ENCODE measurements at regions of chr16 and their contacts with region 1.

Region 1: DNA sequence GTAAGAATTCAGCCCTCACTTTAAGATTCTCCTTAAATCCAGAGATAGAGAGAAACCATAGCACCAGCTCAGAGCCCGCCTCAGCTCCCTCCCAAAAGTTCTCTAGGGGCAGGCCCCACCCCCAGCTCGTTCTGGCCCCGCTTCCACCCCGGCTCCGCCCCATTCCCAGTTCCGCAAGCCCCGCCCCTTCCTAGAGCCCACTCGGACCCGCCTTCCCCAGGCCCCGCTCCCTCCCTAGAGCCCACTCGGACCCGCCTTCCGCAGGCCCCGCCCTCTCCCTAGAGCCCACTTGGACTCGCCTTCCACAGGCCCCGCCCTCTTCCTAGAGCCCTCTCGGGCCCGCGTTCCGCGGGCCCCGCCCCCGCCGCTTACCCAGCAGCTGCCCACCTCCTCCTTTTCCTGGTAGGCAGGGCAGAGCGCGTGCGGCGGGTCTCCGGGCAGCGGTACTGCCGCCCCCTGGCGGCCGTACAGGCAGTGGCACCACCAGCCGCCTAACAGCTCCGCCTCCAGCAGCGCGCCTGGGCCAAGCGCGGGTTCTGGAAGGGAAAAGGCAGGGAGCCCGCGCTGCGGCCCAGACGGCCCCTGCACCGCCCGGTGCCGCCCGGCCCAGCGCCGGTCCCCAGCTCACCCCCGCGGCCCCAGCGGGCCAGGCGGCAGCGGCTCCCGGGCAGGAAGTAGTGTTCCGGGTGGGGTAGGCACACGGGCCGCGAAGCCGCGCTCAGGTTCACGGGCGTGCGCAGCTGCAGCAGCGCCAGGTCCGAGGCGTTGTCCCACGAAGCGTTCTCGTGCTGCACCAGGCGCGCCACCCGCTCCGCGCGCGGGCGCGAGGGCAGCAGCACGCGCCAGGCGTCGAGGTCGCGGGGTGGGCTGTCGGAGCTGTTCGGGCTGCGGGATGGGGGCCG is 6.8 kb upstream of the PRSS8 start:
- DNase-seq: peak; percentile 90 to 98 (median 95)
- ATAC-seq: peak; percentile 91
- H3K4me3 ChIP-seq: peak overlapping the region; percentile 35 to 66
- H3K4me3 Mint-ChIP-seq: peak overlapping the region; percentile 69
- H3K27ac ChIP-seq: peak overlapping the region; percentile 42 to 67
- H3K27ac Mint-ChIP-seq: peak overlapping the region; percentile 77
- H3K4me1 ChIP-seq: peaks cover 16% of the 10 kb centered on the region
- H3K4me1 Mint-ChIP-seq: peaks cover 14% of the 10 kb centered on the region
- H3K27me3 ChIP-seq: no peaks in the 10 kb centered on the region
- H3K27me3 Mint-ChIP-seq: no peaks in the 10 kb centered on the region
- CTCF ChIP-seq: peak; percentile 84

Region 2: DNA sequence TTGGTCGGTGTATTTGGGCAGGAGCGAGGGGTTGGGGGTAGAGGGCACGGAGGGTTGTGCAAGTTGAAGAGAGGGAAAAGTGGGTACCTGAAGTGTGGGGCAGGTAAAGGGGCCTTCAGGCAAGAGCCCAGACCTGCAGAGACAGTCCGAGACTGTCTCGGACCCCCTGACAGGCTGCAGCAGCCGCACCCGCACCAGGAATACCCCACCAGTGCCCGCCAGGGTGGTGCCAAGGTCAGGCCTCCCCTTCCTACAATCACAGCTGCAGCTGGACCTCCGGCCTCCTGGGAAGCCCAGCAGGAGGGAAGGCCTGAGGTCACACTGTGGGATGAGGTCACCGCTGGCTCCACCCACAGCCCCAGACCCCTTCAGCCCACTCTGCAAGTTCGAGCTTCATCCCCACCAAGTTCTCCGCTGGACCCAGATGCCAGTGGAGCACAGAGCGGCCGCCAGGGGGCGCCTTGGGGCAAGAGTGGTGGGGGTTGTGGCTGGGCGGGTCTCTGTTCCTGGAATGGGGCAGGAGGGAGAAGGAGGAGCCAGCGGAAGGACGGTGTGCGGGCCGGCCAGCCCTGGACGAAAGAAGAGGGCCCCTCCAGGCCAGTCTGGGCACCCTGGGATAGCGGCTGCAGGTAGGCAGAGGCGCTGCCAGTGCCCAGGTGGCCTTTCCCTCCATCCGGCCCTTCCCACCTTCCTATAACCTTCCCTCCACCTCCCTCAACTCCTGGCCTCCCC is 157.5 kb before region 1 on chr16 and contains the start of gene HSD3B7:
- CTCF ChIA-PET with region 1: interaction called, 24 read pairs
- POLR2A ChIA-PET with region 1: no interaction called
- intact Hi-C with region 1: loop called in 1 of 2 experiments (anchors 1 kb)
- DNase-seq: peak; percentile 55 to 90 (median 78)
- ATAC-seq: peak; percentile 85
- H3K4me3 ChIP-seq: no peak within 1 kb of the TSS
- H3K4me3 Mint-ChIP-seq: no peak within 1 kb of the TSS
- H3K27ac ChIP-seq: no peak within 1 kb of the TSS
- H3K27ac Mint-ChIP-seq: no peak within 1 kb of the TSS
- H3K4me1 ChIP-seq: peaks cover 3% of the 10 kb centered on the region
- H3K4me1 Mint-ChIP-seq: peaks cover 4% of the 10 kb centered on the region
- H3K27me3 ChIP-seq: no peaks in the 10 kb centered on the region
- H3K27me3 Mint-ChIP-seq: no peaks in the 10 kb centered on the region
- CTCF ChIP-seq: peak; percentile 77
- total RNA-seq, gene HSD3B7: 0.19 to 0.25 TPM

Region 3: GRCh38 chr16:31073968-31074813 is 68.2 kb before region 1 on chr16 and contains the starts of genes ZNF646 and ZNF668:
- CTCF ChIA-PET with region 1: interaction called, 10 read pairs
- POLR2A ChIA-PET with region 1: interaction called, 28 read pairs
- intact Hi-C with region 1: loop called (anchors 1 to 5 kb)
- DNase-seq: peak; percentile 94 to 100 (median 97)
- ATAC-seq: peak; percentile 82
- H3K4me3 ChIP-seq: peak within 1 kb of the TSS; percentile 67 to 83
- H3K4me3 Mint-ChIP-seq: peak within 1 kb of the TSS; percentile 96
- H3K27ac ChIP-seq: peak within 1 kb of the TSS; percentile 88 to 95
- H3K27ac Mint-ChIP-seq: peak within 1 kb of the TSS; percentile 97
- H3K4me1 ChIP-seq: peaks cover 27% of the 10 kb centered on the region
- H3K4me1 Mint-ChIP-seq: peaks cover 40% of the 10 kb centered on the region
- H3K27me3 ChIP-seq: no peaks in the 10 kb centered on the region
- H3K27me3 Mint-ChIP-seq: no peaks in the 10 kb centered on the region
- CTCF ChIP-seq: no peak
- total RNA-seq, gene ZNF646: 16.6 to 18.7 TPM
- total RNA-seq, gene ZNF668: 10.1 to 11.1 TPM

Region 4: DNA sequence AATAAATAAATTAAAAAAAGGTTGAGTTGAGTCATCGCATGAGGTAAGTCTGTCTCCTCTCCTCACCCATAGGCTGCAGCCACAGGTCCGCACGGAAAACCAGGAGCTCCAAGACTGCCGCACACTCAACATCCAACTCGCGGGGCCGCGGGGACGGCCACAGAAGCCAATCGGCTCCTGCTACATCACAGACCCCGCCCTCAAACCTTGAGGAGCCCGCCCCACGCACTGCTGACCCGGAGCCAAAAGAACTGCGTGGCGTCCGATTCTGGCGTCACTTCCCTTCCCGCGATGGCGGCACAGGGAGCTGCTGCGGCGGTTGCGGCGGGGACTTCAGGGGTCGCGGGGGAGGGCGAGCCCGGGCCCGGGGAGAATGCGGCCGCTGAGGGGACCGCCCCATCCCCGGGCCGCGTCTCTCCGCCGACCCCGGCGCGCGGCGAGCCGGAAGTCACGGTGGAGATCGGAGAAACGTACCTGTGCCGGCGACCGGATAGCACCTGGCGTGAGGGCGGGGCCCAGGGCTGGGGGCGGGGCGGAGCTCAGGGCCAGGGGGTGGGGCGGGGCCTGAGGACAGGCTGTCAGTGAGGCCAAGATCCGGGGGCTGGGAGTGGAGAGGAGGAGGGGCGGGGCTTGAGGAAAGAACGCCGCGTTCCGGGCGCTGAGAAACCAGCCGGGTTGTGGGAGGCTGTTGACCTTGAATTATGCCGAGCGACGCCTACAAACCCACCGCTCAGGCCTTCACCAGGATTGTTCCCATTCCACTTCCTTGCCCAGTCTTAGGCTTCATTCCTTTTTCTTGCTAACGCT is 24.8 kb before region 1 on chr16 and contains the start of gene KAT8:
- CTCF ChIA-PET with region 1: interaction called, 36 read pairs
- POLR2A ChIA-PET with region 1: interaction called, 49 read pairs
- intact Hi-C with region 1: loop called (anchors 1 to 2 kb)
- DNase-seq: peak; percentile 92 to 99 (median 97)
- ATAC-seq: peak; percentile 92
- H3K4me3 ChIP-seq: peak within 1 kb of the TSS; percentile 53 to 93
- H3K4me3 Mint-ChIP-seq: peak within 1 kb of the TSS; percentile 74
- H3K27ac ChIP-seq: peak within 1 kb of the TSS; percentile 83 to 96
- H3K27ac Mint-ChIP-seq: peak within 1 kb of the TSS; percentile 95
- H3K4me1 ChIP-seq: peaks cover 11% of the 10 kb centered on the region
- H3K4me1 Mint-ChIP-seq: peaks cover 18% of the 10 kb centered on the region
- H3K27me3 ChIP-seq: no peaks in the 10 kb centered on the region
- H3K27me3 Mint-ChIP-seq: no peaks in the 10 kb centered on the region
- CTCF ChIP-seq: no peak
- total RNA-seq, gene KAT8: 105 to 107 TPM

Region 5: GRCh38 chr16:31333686-31334649 is 191.6 kb after region 1 on chr16:
- CTCF ChIA-PET with region 1: interaction called, 3 read pairs
- POLR2A ChIA-PET with region 1: no interaction called
- intact Hi-C with region 1: loop called in 1 of 2 experiments (anchors 10 kb)
- DNase-seq: peak in 6 of 9 experiments; percentile 27 to 66 (median 39)
- ATAC-seq: peak; percentile 70
- H3K4me3 ChIP-seq: no peak overlapping the region
- H3K4me3 Mint-ChIP-seq: no peak overlapping the region
- H3K27ac ChIP-seq: no peak overlapping the region
- H3K27ac Mint-ChIP-seq: peak overlapping the region; percentile 49
- H3K4me1 ChIP-seq: peaks cover 37% of the 10 kb centered on the region
- H3K4me1 Mint-ChIP-seq: peaks cover 43% of the 10 kb centered on the region
- H3K27me3 ChIP-seq: no peaks in the 10 kb centered on the region
- H3K27me3 Mint-ChIP-seq: no peaks in the 10 kb centered on the region
- CTCF ChIP-seq: peak; percentile 12

Region 6: GRCh38 chr16:31868691-31869167 is 726.4 kb after region 1 on chr16:
- CTCF ChIA-PET with region 1: interaction called, 3 read pairs
- POLR2A ChIA-PET with region 1: interaction called, 4 read pairs
- intact Hi-C with region 1: loop called in 1 of 2 experiments (anchors 1 kb)
- DNase-seq: peak; percentile 60 to 88 (median 82)
- ATAC-seq: peak; percentile 20
- H3K4me3 ChIP-seq: peak overlapping the region; percentile 33 to 48
- H3K4me3 Mint-ChIP-seq: peak overlapping the region; percentile 66
- H3K27ac ChIP-seq: peak overlapping the region; percentile 18 to 79
- H3K27ac Mint-ChIP-seq: peak overlapping the region; percentile 88
- H3K4me1 ChIP-seq: peaks cover 31% of the 10 kb centered on the region
- H3K4me1 Mint-ChIP-seq: peaks cover 47% of the 10 kb centered on the region
- H3K27me3 ChIP-seq: no peaks in the 10 kb centered on the region
- H3K27me3 Mint-ChIP-seq: no peaks in the 10 kb centered on the region
- CTCF ChIP-seq: peak; percentile 96

Measured in CD8-positive, alpha-beta T cell (primary cell).